ENCODE measurements at regions of chr1 and their contacts with region 1.

Region 1: DNA sequence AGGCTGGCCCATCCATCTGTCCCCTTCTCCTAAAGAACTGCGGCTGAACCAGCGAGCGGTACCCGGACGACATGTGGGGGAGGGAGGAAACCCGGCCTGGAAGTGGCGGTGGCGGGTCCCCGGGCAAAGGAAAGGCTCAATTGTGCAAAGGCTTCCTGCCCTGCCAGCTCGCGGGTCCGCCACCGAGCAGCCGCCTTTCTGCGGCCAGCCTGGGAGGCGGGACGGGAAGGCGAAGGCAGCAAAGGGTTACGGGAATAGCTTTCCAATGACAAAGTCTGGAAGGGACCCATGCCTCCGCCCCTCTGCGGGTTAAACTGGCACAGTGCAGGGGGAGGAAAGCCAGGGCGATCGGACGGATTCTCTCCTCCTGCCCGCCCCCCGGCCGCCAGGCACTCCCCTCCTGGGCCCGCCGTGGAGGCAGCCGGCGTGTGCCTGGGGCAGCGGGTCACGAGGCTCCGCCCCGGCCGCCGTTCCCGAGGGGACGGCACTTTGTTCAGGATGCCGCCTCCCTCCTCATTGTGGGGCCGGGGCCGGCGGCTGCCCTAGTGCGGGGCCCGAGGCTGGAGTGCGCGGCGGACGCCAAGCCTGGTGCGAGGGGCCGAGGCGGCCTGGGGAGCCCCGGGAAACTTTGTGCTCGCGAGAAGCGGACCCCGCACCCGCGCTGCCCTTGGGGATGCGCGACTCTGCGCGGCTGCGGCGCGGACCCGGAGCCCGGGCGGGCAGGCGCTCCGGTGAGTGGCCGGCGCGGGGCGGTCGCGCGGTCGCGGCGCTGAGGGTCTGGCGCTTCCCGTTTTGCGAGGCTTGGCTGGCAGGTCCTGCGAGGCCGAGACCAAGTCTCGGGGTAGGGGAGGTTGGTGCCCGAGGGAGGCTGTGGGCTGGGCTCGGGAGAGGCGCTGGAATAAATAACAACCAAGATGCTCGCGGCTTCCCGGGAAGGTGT is at the start of gene NAV1:
- DNase-seq: peak; percentile 77 to 87 (median 79)
- ATAC-seq: peak; percentile 18 to 79 (median 70)
- H3K4me3 ChIP-seq: peak within 1 kb of the TSS; percentile 34 to 84 (median 72)
- H3K27ac ChIP-seq: peak within 1 kb of the TSS; percentile 55 to 92 (median 86)
- H3K4me1 ChIP-seq: peaks cover 0 to 89% (median 53%) of the 10 kb centered on the region in 12 donors
- H3K27me3 ChIP-seq: no peaks in the 10 kb centered on the region
- CTCF ChIP-seq: no peak
- POLR2A ChIP-seq: peak in 1 of 2 donors; percentile 72
- total RNA-seq, gene NAV1: 58.0 to 107 (median 85.0) TPM

Region 2: GRCh38 chr1:201553496-201554189 is 14.8 kb after region 1 on chr1:
- intact Hi-C with region 1: loop called in 2 of 10 experiments (anchors 2 kb)
- DNase-seq: no peak
- ATAC-seq: peak in 1 of 4 donors; percentile 27
- H3K4me3 ChIP-seq: no peak overlapping the region
- H3K27ac ChIP-seq: peak overlapping the region; percentile 46 to 77 (median 70)
- H3K4me1 ChIP-seq: peaks cover 2 to 73% (median 54%) of the 10 kb centered on the region in 12 donors
- H3K27me3 ChIP-seq: no peaks in the 10 kb centered on the region
- CTCF ChIP-seq: no peak
- POLR2A ChIP-seq: no peak